Aorta (tissue), 5 donors: ENCODE measurements at regions of chr14 and their contacts with region 1.

Region 1: GRCh38 chr14:36320200-36320896 is at the start of gene MBIP:
- DNase-seq: peak; percentile 93
- ATAC-seq: peak; percentile 99
- H3K4me3 ChIP-seq: peak within 1 kb of the TSS; percentile 65 to 87
- H3K27ac ChIP-seq: peak within 1 kb of the TSS in 1 of 2 donors; percentile 70
- H3K4me1 ChIP-seq: no peaks in the 10 kb centered on the region
- H3K27me3 ChIP-seq: peaks cover 0 to 1% of the 10 kb centered on the region in 2 donors
- total RNA-seq, gene MBIP: 23.4 to 24.6 TPM

Region 2: DNA sequence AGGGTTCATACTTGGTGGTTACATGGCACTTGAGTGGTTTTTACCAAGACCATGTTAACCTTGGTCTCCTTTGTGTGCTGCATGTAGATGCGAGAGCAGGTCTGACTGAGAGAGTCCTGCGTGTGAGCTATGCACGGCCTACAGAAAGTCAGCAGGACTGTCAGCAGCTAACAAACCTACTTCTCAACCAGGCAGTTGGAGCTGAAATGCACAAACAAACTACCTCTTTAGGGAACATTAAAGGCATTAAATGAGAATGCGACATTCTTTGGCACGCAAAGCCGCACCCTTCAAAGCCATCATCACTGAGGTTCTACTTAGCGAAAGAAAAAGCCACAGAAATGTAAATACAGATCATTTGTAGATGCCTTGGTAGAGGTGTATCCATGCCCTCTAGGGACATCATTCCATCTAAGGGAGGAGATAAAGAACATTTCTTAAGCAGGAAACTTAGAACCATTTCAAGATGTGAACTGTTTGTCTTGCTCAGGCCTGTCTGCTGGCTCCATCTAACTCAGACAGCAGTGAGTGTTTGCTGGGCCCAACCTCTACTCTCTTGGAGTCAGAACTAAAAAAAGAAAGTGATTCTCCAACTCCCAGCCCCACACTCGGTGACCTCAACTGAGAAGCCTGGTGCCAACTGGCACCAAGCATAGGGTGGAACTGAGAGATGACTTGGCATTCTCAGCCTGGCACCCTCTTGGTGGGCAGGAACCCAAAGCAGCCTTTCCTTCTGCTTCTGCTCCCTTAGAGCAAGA is 63.5 kb after region 1 on chr14:
- intact Hi-C with region 1: loop called in 1 of 2 experiments (anchors 5 kb)
- DNase-seq: peak; percentile 84 to 91
- ATAC-seq: peak; percentile 87
- H3K4me3 ChIP-seq: no peak overlapping the region
- H3K27ac ChIP-seq: peak overlapping the region; percentile 64 to 95
- H3K4me1 ChIP-seq: no peaks in the 10 kb centered on the region
- H3K27me3 ChIP-seq: no peaks in the 10 kb centered on the region

Region 3: DNA sequence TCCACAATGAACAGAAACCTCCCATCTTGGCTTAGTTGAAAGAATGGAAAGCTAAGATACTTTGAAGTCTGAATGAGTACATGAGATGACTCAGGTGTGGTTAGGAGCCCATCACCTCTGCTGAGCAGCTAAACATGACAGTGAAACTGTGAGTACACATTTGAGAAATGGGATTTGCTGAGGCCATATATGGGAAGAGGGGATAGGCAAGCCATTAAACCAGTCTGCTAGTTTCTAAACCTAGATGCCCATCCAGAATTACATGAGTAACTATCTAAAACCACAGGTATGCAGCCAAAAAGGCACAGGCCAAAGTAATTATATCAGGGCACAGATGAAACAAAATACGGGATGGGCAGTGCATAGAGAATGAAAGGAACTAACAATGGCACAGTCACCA is 158.4 kb after region 1 on chr14:
- intact Hi-C with region 1: no loop called
- DNase-seq: no peak
- ATAC-seq: no peak
- H3K4me3 ChIP-seq: no peak overlapping the region
- H3K27ac ChIP-seq: no peak overlapping the region
- H3K4me1 ChIP-seq: no peaks in the 10 kb centered on the region
- H3K27me3 ChIP-seq: peaks cover 0 to 2% of the 10 kb centered on the region in 2 donors